ENCODE measurements at regions of chr17 and their contacts with region 1.

Region 1: DNA sequence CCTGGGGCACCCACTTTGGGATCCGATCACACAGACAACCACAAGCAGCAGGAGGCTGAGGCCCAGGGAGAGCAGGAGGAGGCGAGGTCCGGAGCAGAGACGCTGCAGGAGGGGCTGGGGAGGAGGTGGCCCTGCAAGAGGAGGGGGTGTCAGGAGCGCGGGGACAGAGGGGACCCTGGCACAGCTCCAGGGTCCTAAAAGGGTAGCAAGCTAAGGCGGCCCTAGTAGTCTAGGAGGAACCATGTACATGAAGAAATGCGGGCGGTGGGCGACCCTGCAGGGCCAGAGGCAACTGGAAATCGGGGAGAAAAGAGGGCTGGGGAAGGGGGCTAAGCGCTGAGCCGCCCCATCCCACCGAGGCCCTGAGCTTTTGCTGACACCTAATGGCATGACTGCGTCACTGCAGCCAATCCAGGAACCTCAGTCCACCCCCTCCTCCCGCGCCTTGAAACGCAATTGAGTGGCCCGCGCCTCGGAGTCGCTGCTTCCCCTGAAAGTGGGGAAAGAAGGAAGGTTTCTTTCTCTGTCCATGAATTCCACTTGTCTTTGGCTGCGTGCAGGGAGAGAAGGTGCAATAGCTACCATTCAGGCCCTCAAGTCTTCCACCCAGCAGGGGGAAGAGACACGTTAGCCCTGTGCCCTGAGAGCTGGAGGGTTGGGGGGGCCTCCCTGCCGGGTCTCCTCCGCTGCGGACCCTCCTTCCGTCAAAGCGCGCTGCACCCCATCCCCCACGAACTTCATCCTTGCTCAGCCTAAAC is 1.8 kb downstream of the ASGR1 start:
- DNase-seq: peak; percentile 72
- ATAC-seq: peak; percentile 49
- H3K4me3 ChIP-seq: peak overlapping the region; percentile 73 to 93 (median 84)
- H3K27ac ChIP-seq: peak overlapping the region; percentile 98
- H3K4me1 ChIP-seq: peaks cover 51% of the 10 kb centered on the region
- H3K27me3 ChIP-seq: no peaks in the 10 kb centered on the region; a peak in 1 of 5 replicates
- CTCF ChIP-seq: peak; percentile 90
- EP300 ChIP-seq: no peak
- POLR2A ChIP-seq: peak; percentile 13 to 38; a peak in 1 of 4 replicates
- RAD21 ChIP-seq: peak; percentile 80

Region 2: GRCh38 chr17:7102421-7102820 is 75.0 kb before region 1 on chr17:
- CTCF ChIA-PET with region 1: no interaction called
- POLR2A ChIA-PET with region 1: no interaction called
- in situ Hi-C with region 1: no loop called
- intact Hi-C with region 1: no loop called
- DNase-seq: no peak
- ATAC-seq: no peak
- H3K4me3 ChIP-seq: no peak overlapping the region
- H3K27ac ChIP-seq: no peak overlapping the region
- H3K4me1 ChIP-seq: no peaks in the 10 kb centered on the region
- H3K27me3 ChIP-seq: no peaks in the 10 kb centered on the region
- CTCF ChIP-seq: no peak
- EP300 ChIP-seq: no peak
- POLR2A ChIP-seq: no peak
- RAD21 ChIP-seq: no peak

Region 3: DNA sequence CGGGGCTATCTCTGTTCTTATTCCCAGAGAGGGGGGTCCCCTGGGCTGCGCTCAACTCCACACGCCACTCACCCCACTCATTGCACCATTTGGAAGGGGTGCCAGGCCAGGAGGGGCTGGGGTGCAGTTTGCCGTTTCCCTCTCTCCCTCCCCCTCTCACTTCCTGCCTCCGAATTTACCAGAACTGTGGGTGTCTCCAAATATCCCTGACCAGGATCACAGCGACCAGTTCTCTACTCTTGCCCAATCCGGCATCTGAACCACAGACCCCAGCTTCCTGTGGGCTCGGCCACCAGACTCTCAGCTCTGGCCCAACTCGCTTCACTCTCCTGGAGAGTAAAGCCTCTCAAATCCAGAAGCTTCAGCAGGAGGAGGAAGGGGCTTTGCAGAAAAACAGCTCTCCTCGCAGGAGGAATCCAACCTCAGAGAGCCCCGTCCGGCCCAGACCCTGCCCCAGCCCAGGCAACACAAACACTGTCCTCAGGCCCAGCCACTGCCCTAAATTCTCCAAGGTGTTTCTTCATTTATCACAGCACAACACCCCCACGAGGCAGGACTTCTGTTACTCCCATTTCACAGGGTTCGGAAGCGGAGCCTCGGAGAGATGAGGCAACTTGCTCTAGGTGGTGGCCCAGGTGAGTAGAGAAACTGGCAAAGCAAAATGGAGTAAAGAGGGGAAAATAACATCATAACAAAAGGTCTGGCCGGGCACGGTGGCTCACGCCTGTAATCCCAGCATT is 62.3 kb before region 1 on chr17:
- CTCF ChIA-PET with region 1: no interaction called
- POLR2A ChIA-PET with region 1: interaction called, 45 read pairs
- in situ Hi-C with region 1: no loop called
- intact Hi-C with region 1: no loop called
- DNase-seq: peak; percentile 91
- ATAC-seq: peak; percentile 77
- H3K4me3 ChIP-seq: peak overlapping the region; percentile 86 to 99 (median 88)
- H3K27ac ChIP-seq: peak overlapping the region; percentile 98
- H3K4me1 ChIP-seq: peaks cover 87% of the 10 kb centered on the region
- H3K27me3 ChIP-seq: peaks cover 0 to 5% of the 10 kb centered on the region in 2 experiments; a peak in 1 of 5 replicates
- CTCF ChIP-seq: no peak
- EP300 ChIP-seq: no peak
- POLR2A ChIP-seq: peak; percentile 40 to 52; a peak in 3 of 4 replicates
- RAD21 ChIP-seq: 0 out of 2 replicates have a peak, but pooled peaks have one; percentile 3

Region 4: DNA sequence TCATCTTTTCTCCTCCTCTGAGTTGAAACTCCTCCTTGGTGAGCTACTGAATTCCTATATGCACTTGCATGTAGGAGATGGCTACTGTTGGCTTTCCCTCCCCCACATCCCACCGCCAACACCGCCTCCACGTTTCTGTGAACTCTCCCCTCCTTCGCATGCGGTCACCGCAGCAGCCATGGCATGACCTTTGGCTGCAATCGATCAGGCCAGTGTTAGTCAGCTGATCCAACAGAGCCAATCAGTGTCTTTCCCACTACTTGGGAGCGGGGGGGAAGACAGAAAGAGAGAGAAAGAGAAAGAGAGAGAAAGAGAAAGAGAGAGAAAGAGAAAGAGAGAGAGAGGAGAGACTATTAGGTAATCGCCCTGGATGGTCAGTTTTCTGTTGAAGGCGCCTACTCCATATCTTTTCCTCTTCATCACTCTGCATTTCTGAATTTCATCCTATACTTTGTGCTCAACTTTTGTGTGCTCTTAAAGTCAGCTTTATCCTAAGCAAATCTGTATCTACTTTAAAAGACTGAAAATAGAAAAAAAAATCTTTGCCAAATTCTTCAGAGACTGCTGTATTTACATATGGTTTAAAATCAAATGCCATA is 20.9 kb before region 1 on chr17:
- CTCF ChIA-PET with region 1: no interaction called
- POLR2A ChIA-PET with region 1: interaction called, 22 read pairs
- in situ Hi-C with region 1: no loop called
- intact Hi-C with region 1: no loop called
- DNase-seq: peak; percentile 79
- ATAC-seq: peak; percentile 89
- H3K4me3 ChIP-seq: no peak overlapping the region
- H3K27ac ChIP-seq: no peak overlapping the region
- H3K4me1 ChIP-seq: peaks cover 33% of the 10 kb centered on the region
- H3K27me3 ChIP-seq: no peaks in the 10 kb centered on the region
- CTCF ChIP-seq: 0 out of 2 replicates have a peak, but pooled peaks have one; percentile 26
- EP300 ChIP-seq: peak in 1 of 2 experiments; percentile 59; a peak in 2 of 4 replicates
- POLR2A ChIP-seq: no peak
- RAD21 ChIP-seq: 0 out of 2 replicates have a peak, but pooled peaks have one; percentile 32

Region 5: DNA sequence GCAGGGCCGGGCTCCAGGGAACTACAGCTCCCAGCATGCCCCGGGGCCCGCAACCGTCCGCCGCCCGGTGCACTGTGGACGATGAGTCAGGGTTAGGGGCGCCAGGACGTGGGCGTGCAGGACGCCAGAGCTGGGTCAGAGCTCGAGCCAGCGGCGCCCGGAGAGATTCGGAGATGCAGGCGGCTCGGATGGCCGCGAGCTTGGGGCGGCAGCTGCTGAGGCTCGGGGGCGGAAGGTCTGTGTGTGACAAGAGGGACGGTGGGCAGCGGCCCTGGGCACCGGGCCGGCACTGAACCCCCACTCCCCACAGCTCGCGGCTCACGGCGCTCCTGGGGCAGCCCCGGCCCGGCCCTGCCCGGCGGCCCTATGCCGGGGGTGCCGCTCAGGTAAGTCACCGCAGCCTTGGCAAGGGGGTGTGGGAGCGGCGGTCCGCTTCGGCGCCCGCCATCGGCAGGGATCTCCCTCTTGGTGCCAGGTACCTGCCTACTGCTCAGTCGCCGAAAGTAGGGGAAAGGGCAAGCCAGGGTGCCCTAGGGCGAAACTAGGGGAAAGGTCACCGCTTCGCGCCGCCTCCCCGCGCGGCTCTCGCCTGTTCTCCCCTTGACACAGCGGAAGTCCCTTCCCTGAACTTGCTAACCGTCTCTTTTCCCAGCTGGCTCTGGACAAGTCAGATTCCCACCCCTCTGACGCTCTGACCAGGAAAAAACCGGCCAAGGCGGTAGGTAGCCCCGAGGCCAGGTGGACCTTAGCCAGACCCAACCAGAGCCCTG is 42.6 kb after region 1 on chr17 and contains the starts of genes ACADVL and DLG4:
- CTCF ChIA-PET with region 1: no interaction called
- POLR2A ChIA-PET with region 1: interaction called, 76 read pairs
- in situ Hi-C with region 1: loop called (anchors 5 kb)
- intact Hi-C with region 1: no loop called
- DNase-seq: peak; percentile 75
- ATAC-seq: peak; percentile 85
- H3K4me3 ChIP-seq: peak within 1 kb of the TSS; percentile 73 to 93 (median 90)
- H3K27ac ChIP-seq: peak within 1 kb of the TSS; percentile 96
- H3K4me1 ChIP-seq: peaks cover 62% of the 10 kb centered on the region
- H3K27me3 ChIP-seq: peaks cover 0 to 4% of the 10 kb centered on the region in 2 experiments; a peak in 2 of 5 replicates
- CTCF ChIP-seq: 0 out of 2 replicates have a peak, but pooled peaks have one; percentile 8
- EP300 ChIP-seq: no peak
- POLR2A ChIP-seq: peak; percentile 88 to 94
- RAD21 ChIP-seq: peak; percentile 46; the same call in 1 of the 2 replicates
- total RNA-seq, gene ACADVL: 106 and 219 TPM in 2 replicates
- total RNA-seq, gene DLG4: 0.25 and 0.71 TPM in 2 replicates

Region 6: GRCh38 chr17:7239091-7240027 is 62.0 kb after region 1 on chr17 and contains the start of gene PHF23:
- CTCF ChIA-PET with region 1: no interaction called
- POLR2A ChIA-PET with region 1: interaction called, 19 read pairs
- in situ Hi-C with region 1: no loop called
- intact Hi-C with region 1: loop called (anchors 10 kb)
- DNase-seq: peak; percentile 97
- ATAC-seq: peak; percentile 66
- H3K4me3 ChIP-seq: peak within 1 kb of the TSS; percentile 97 to 98 (median 98)
- H3K27ac ChIP-seq: peak within 1 kb of the TSS; percentile 88
- H3K4me1 ChIP-seq: peaks cover 54% of the 10 kb centered on the region
- H3K27me3 ChIP-seq: no peaks in the 10 kb centered on the region; a peak in 1 of 5 replicates
- CTCF ChIP-seq: no peak
- EP300 ChIP-seq: 0 out of 4 replicates have a peak, but pooled peaks of 1 of the 2 experiments have one; percentile 28
- POLR2A ChIP-seq: peak; percentile 51 to 69; a peak in 3 of 4 replicates
- RAD21 ChIP-seq: 0 out of 2 replicates have a peak, but pooled peaks have one; percentile 9
- total RNA-seq, gene PHF23: 33.2 and 37.5 TPM in 2 replicates

Measured in HepG2 (cell line).